RWPE1 (cell line): ENCODE measurements at regions of chr7 and their contacts with region 1.

Region 1: GRCh38 chr7:99472561-99473243 is at the start of gene ZNF789:
- DNase-seq: peak; percentile 99
- H3K27ac ChIP-seq: peak within 1 kb of the TSS; percentile 96
- CTCF ChIP-seq: no peak

Region 2: GRCh38 chr7:99126921-99127553 is 345.7 kb before region 1 on chr7:
- CTCF ChIA-PET with region 1: no interaction called
- POLR2A ChIA-PET with region 1: no interaction called
- DNase-seq: no peak
- H3K27ac ChIP-seq: 0 out of 2 replicates have a peak overlapping the region, but pooled peaks have one; percentile 9
- CTCF ChIP-seq: no peak

Region 3: GRCh38 chr7:99740573-99741440 is 268.1 kb after region 1 on chr7:
- CTCF ChIA-PET with region 1: no interaction called
- POLR2A ChIA-PET with region 1: interaction called, 11 read pairs
- DNase-seq: peak; percentile 30
- H3K27ac ChIP-seq: peak overlapping the region; percentile 63
- CTCF ChIP-seq: no peak